H1 (cell line): ENCODE measurements at regions of chr1 and their contacts with region 1.

Region 1: GRCh38 chr1:154145986-154146385 is 8.9 kb downstream of the NUP210L start:
- DNase-seq: no peak
- H3K4me3 ChIP-seq: no peak overlapping the region
- H3K27ac ChIP-seq: no peak overlapping the region
- H3K4me1 ChIP-seq: no peaks in the 10 kb centered on the region
- H3K27me3 ChIP-seq: no peaks in the 10 kb centered on the region
- CTCF ChIP-seq: peak in 1 of 3 experiments; percentile 34; a peak in 1 of 4 replicates
- EP300 ChIP-seq: no peak
- POLR2A ChIP-seq: no peak
- RAD21 ChIP-seq: no peak; a peak in 1 of 4 replicates

Region 2: DNA sequence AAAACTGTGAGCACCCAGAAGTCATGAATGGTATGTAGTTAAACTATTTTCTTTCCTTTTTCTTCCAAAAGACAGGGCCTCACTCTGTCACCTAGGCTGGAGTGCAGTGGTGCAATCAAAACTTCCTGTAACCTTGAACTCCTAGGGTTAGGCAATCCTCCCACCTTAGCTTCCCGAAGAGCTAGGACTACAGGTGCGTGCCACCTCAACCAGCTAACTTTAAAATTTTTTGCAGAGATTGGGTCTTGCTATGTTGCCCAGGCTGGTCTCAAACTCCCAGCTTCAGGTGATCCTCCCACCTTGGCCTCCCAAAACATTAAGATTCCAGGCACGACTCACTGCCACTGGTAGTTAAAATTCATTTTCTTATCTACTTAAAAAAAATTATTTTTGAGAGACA is 285.7 kb before region 1 on chr1:
- CTCF ChIA-PET with region 1: no interaction called
- POLR2A ChIA-PET with region 1: no interaction called
- DNase-seq: no peak
- H3K4me3 ChIP-seq: no peak overlapping the region
- H3K27ac ChIP-seq: no peak overlapping the region
- H3K4me1 ChIP-seq: peaks cover 0 to 4% (median 1%) of the 10 kb centered on the region in 4 experiments; a peak in 4 of 7 replicates
- H3K27me3 ChIP-seq: no peaks in the 10 kb centered on the region
- CTCF ChIP-seq: no peak
- EP300 ChIP-seq: no peak
- POLR2A ChIP-seq: no peak
- RAD21 ChIP-seq: no peak

Region 3: DNA sequence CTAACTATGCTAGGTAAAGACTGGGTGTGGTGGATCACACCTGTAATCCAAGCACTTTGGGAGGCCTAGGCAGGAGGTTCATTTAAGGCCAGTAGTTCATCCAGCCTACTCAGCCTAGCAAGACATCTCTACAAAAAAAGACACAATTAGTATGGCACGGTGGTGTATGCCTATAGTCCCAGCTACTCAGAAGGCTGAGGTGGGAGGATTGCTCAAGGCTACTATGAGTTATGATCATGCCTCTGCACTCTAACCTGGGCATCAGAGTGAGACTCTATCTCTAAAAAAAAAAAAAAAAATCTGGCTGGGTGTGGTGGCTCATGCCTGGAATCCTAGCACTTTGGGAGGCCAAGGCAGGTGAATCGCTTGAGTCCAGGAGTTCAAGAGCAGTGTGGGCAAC is 12.7 kb before region 1 on chr1:
- CTCF ChIA-PET with region 1: interaction called, 14 read pairs
- POLR2A ChIA-PET with region 1: interaction called, 3 read pairs
- DNase-seq: no peak
- H3K4me3 ChIP-seq: no peak overlapping the region
- H3K27ac ChIP-seq: no peak overlapping the region
- H3K4me1 ChIP-seq: no peaks in the 10 kb centered on the region
- H3K27me3 ChIP-seq: no peaks in the 10 kb centered on the region
- CTCF ChIP-seq: no peak
- EP300 ChIP-seq: no peak
- POLR2A ChIP-seq: no peak
- RAD21 ChIP-seq: no peak

Region 4: DNA sequence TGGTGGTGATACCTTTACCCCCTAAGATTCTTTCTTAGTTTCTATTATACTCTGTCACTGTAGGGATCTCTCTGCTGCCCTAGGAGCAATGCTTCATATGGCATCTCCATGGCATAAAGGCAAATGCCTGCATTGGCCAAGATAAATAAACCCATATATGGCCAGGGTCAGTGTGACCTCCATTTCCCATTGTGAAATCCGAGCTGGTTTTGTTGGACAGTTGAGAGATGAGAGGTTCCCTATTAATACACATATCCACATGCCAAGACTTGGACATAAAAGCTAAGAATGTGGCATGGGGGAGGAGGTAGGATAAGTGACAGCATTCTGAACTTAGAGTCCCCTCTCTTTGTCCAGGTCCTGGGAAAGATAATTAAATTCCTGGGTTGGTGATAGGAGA is 44.6 kb after region 1 on chr1:
- CTCF ChIA-PET with region 1: no interaction called
- POLR2A ChIA-PET with region 1: no interaction called
- DNase-seq: no peak
- H3K4me3 ChIP-seq: no peak overlapping the region
- H3K27ac ChIP-seq: no peak overlapping the region
- H3K4me1 ChIP-seq: peaks cover 5 to 17% (median 11%) of the 10 kb centered on the region in 4 experiments; a peak in 5 of 7 replicates
- H3K27me3 ChIP-seq: no peaks in the 10 kb centered on the region
- CTCF ChIP-seq: no peak
- EP300 ChIP-seq: no peak
- POLR2A ChIP-seq: no peak
- RAD21 ChIP-seq: no peak